HAP-1 (cell line): ENCODE measurements at regions of chr19 and their contacts with region 1.

Region 1: DNA sequence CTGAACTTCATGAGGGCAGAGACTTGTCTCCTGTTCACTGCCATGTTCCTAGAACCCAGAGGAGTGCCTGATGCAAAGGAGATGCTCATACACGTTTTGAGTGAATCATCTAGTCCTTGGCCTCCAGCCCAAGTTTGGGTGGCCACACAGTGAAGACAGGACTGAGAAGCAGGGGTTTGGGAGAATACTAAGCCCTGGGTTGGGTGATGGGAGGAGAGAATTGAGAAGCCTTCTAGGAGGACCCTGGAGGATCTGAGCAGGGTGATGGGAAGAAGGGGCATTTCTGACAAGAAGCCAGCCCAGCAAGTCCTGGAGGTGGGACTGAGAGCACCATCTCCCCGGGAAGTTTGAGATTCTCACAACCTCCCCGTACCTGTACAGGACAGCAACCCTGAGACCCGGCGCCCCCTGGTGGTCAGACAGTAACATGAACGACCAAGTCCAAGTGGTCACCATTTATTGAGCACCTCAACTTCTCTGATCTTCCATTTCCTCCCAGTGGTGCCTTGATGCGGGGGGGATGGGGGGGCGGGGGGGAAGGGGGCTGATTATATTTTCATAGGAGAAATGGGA is 11.0 kb downstream of the CTU1 start:
- DNase-seq: peak; percentile 48 to 85
- H3K4me3 ChIP-seq: no peak overlapping the region
- H3K4me1 ChIP-seq: no peaks in the 10 kb centered on the region
- H3K27me3 ChIP-seq: no peaks in the 10 kb centered on the region

Region 2: DNA sequence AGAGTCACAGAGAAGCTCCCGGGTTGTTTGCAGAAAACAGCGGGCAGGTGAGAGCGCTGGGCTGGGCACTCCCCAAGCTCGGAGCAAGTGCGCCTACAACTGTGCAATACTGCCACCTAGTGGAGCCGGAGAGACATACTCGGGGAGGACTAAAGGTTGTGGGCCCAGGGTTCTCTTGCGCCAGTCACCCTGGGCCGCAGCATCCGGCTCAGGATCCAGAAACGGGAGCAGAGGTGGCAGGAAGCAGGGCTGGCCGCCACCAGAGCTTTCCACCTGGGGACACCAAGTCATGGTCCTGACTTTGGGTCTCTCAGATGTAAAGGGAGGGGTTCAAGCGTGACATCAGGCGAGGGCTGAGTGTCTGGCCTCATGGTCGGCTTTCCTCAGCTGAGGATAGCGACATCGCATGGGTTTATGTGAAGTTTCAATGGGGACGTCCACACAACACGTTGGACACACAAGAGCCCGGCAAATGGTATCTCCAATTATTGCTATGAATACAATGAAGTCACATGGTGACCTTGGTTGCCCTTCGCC is 174.9 kb before region 1 on chr19:
- in situ Hi-C with region 1: loop called (anchors 10 kb)
- DNase-seq: peak; percentile 64 to 84
- H3K4me3 ChIP-seq: no peak overlapping the region
- H3K4me1 ChIP-seq: no peaks in the 10 kb centered on the region
- H3K27me3 ChIP-seq: no peaks in the 10 kb centered on the region; the same call in 1 of the 2 replicates

Region 3: GRCh38 chr19:51020988-51021651 is 76.1 kb before region 1 on chr19:
- in situ Hi-C with region 1: loop called (anchors 5 kb)
- DNase-seq: peak; percentile 58 to 73
- H3K4me3 ChIP-seq: no peak overlapping the region
- H3K4me1 ChIP-seq: no peaks in the 10 kb centered on the region; the same call in 1 of the 2 replicates
- H3K27me3 ChIP-seq: peaks cover 25% of the 10 kb centered on the region

Region 4: DNA sequence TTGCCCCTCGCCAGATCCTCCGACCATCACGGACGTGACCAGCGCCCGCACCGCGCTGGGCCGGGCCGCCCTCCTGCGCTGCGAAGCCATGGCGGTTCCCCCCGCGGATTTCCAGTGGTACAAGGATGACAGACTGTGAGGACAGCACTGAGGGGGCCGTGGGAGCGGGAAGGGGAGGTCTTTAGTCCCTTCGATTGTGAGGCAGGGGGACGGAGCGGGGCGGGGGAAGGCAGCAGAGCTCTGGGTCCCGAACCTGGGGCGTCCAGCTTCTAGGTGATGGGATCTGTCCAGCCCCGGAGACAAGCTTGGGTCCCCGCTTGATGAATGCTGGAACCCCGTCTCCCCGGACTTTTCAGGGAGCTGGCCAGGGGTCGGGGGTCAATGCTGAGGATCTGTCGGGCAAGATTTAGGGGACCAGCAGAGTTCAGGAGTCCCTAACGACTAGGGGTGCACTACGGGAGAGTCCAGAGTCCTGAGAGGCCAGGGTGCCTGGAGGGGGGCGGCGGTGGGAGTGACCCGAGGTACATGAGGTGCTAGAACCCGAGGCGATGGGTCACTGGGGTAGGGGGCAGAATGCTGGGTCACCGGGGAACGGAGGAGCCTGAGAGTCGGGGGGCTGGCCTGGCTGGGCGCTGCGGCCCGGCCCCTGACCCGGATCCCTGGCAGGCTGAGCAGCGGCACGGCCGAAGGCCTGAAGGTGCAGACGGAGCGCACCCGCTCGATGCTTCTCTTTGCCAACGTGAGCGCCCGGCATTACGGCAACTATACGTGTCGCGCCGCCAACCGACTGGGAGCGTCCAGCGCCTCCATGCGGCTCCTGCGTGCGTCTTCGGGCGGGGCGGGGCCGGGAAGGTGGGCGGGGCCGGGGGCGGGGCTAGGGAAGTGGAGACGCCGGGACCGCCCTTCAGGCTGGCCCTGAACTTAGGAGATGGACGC is 230.1 kb after region 1 on chr19:
- in situ Hi-C with region 1: no loop called
- DNase-seq: peak; percentile 37 to 82
- H3K4me3 ChIP-seq: peak overlapping the region; percentile 30
- H3K4me1 ChIP-seq: no peaks in the 10 kb centered on the region
- H3K27me3 ChIP-seq: peaks cover 16% of the 10 kb centered on the region